ENCODE measurements at regions of chr12 and their contacts with region 1.

Region 1: DNA sequence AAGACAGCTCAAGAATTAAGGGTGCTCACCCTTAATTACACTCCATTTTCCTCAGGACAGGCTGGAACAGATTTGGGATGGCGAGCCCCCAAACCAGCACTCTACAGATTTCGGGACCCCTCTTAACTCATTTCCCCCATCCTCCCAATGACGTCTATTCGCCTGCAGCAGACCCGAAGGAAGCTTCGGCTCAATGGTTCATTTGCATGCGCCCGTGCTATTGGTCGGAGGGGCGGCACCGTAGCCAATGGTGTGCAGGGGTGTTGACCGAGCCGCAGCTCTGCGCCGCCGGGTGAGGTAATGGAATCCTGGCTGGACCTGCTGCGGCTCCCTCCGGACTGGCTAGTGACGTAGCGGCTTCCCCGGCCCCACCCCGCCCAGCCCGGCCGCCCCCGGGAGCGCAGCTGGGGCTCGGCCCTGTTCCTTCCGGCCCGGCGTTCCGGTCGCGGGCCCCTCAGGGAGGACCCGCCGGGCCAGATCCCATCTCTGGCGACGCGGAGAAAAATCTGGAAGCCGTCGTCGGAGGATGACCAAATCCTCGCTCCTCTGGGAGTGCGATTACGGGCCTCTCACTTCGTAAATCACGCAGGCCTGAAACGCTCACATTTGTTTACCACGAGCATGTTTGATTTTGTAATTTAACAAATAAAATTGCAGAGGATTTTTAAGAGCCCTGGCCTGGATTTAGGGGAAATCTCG is 18.3 kb upstream of the NR4A1 start:
- DNase-seq: peak; percentile 87
- H3K4me3 ChIP-seq: peak overlapping the region; percentile 53
- CTCF ChIP-seq: no peak

Region 2: GRCh38 chr12:51980051-51980808 is 52.7 kb before region 1 on chr12:
- CTCF ChIA-PET with region 1: interaction called, 726 read pairs
- POLR2A ChIA-PET with region 1: no interaction called
- DNase-seq: no peak
- H3K4me3 ChIP-seq: no peak overlapping the region
- CTCF ChIP-seq: peak; percentile 91

Region 3: GRCh38 chr12:52050761-52051541 is 18.0 kb after region 1 on chr12 and contains the start of gene NR4A1:
- CTCF ChIA-PET with region 1: interaction called, 1,695 read pairs
- POLR2A ChIA-PET with region 1: interaction called, 11 read pairs
- DNase-seq: no peak
- H3K4me3 ChIP-seq: peak within 1 kb of the TSS; percentile 66
- CTCF ChIP-seq: no peak

Region 4: DNA sequence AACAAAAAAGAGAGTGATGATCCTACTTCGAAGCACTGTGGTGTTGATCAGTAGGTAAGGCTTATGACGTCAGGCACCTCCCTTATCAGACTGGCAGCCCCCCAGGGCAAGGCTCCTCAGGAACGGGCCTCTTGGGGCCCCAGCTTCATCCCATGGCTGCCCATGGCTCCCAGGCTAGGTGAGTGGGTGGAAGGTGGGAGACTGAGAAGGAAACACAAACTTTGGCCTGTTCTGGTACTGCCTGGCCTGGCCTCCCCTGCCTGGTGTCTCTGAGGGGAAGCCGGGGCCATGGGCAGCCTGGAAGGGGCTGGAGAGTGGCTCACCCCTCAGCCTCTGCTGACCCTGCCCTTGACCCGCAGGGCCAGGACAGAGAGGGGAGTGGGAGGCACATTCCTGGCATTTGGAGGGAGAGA is 120.0 kb after region 1 on chr12:
- CTCF ChIA-PET with region 1: no interaction called
- POLR2A ChIA-PET with region 1: no interaction called
- DNase-seq: no peak
- H3K4me3 ChIP-seq: no peak overlapping the region
- CTCF ChIP-seq: no peak